Right cardiac atrium (tissue), 5 donors: ENCODE measurements at regions of chr9 and their contacts with region 1.

Region 1: DNA sequence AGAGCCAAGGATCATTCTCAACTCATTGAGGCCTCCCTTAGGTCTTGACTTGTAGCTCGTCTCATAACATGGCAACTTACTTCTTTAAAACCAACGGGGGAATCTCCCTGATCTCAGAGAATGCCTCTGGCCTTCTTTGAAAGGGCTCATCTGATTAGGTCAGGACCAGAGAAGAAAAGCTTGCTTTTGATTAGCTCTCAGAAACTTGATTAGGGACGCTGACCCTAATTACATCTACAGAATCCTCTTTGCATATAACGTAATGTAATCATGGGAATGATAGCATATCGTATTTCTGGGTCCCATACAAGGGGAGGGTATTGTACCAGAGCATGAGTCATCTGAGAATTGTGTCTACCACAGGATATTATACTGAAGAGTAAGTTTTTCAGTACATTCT is 125.1 kb upstream of the SH3GL2 start:
- DNase-seq: no peak
- ATAC-seq: no peak
- H3K4me3 ChIP-seq: no peak overlapping the region
- H3K27ac ChIP-seq: no peak overlapping the region
- H3K4me1 ChIP-seq: no peaks in the 10 kb centered on the region
- H3K27me3 ChIP-seq: no peaks in the 10 kb centered on the region

Region 2: GRCh38 chr9:15873569-15874177 is 1580.1 kb before region 1 on chr9:
- intact Hi-C with region 1: loop called in 1 of 4 experiments (anchors 10 kb)
- DNase-seq: no peak
- ATAC-seq: no peak
- H3K4me3 ChIP-seq: no peak overlapping the region
- H3K27ac ChIP-seq: no peak overlapping the region
- H3K4me1 ChIP-seq: no peaks in the 10 kb centered on the region
- H3K27me3 ChIP-seq: no peaks in the 10 kb centered on the region

Region 3: GRCh38 chr9:17398350-17398749 is 55.4 kb before region 1 on chr9:
- intact Hi-C with region 1: no loop called
- DNase-seq: no peak
- ATAC-seq: no peak
- H3K4me3 ChIP-seq: no peak overlapping the region
- H3K27ac ChIP-seq: no peak overlapping the region
- H3K4me1 ChIP-seq: no peaks in the 10 kb centered on the region
- H3K27me3 ChIP-seq: no peaks in the 10 kb centered on the region